Left cardiac atrium (tissue), 4 donors: ENCODE measurements at regions of chr18 and their contacts with region 1.

Region 1: GRCh38 chr18:80034068-80034851 is at the start of gene RBFA:
- DNase-seq: peak; percentile 100
- ATAC-seq: peak; percentile 94 to 95
- total RNA-seq, gene RBFA: 14.3 to 16.1 TPM

Region 2: GRCh38 chr18:79988451-79989194 is 45.6 kb before region 1 on chr18 and contains the start of gene TXNL4A:
- intact Hi-C with region 1: loop called in 1 of 2 experiments (anchors 10 kb)
- DNase-seq: peak; percentile 92
- ATAC-seq: peak; percentile 99
- total RNA-seq, gene TXNL4A: 92.0 to 114 TPM